ENCODE measurements at regions of chr10 and their contacts with region 1.

Region 1: GRCh38 chr10:72297968-72298773 is 24.4 kb downstream of the DDIT4 start:
- DNase-seq: peak; percentile 98
- ATAC-seq: peak; percentile 76
- H3K4me3 Mint-ChIP-seq: peak overlapping the region; percentile 80
- H3K27ac Mint-ChIP-seq: peak overlapping the region; percentile 99
- H3K4me1 Mint-ChIP-seq: peaks cover 54% of the 10 kb centered on the region
- H3K27me3 Mint-ChIP-seq: no peaks in the 10 kb centered on the region
- CTCF ChIP-seq: no peak

Region 2: DNA sequence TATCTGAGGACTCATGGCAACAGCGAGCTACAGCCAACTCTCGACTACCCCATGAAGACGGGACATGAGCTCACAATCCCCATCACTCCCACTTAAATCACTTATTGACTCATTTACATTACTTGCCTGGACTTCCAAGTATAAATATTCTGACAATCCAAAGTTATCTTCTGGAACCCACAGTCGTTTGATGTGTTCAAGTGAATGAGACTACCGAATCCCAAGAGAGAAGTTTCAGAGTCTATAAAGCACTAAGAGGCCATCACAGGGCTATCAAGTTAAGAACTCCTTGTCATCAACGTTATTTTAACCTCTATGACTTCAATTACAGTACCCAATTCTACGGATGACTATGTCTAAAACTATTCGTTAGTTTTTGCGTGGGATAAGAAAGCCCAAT is 93.9 kb before region 1 on chr10:
- CTCF ChIA-PET with region 1: no interaction called
- POLR2A ChIA-PET with region 1: no interaction called
- intact Hi-C with region 1: no loop called
- DNase-seq: no peak
- ATAC-seq: no peak
- H3K4me3 Mint-ChIP-seq: no peak overlapping the region
- H3K27ac Mint-ChIP-seq: no peak overlapping the region
- H3K4me1 Mint-ChIP-seq: peaks cover 11% of the 10 kb centered on the region
- H3K27me3 Mint-ChIP-seq: no peaks in the 10 kb centered on the region
- CTCF ChIP-seq: no peak

Region 3: DNA sequence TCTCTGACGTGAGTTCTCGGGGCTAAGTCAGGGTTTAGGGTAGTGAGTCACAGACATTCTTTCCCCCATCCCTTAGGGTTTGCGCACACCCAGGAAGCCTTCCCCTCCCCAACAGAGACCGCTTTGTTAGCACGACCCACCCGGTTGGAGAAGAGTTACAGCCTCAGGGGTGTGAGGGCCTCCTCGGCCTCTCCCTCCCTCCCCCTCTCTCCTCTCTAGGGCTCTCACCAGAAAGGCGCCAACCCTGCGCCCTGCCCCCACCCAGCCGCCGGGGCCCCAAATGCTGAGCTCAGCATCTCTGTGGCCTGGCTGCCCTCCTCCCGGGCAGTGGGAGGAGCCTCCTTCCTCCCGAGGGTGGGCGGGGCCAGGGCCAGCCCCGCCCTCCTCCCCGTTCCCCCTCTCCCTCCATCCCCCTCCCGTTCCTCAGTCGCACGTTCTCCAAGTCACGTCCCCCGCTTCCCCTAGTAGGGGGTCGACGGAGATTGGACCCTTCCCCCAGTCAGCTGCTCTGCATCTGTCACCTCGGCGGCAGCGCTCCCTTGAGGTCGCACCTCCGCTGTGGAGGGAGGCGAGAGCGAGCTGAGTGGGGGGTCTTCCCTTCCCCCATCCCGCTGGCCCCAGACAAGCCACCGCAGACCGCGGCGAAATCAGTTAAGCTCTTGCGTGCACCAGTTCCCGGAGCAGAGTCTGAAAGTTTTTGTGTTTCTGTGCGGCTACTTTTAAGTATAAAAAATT is 37.4 kb before region 1 on chr10:
- CTCF ChIA-PET with region 1: interaction called, 4 read pairs
- POLR2A ChIA-PET with region 1: interaction called, 16 read pairs
- intact Hi-C with region 1: loop called (anchors 5 kb)
- DNase-seq: peak; percentile 96
- ATAC-seq: peak; percentile 82
- H3K4me3 Mint-ChIP-seq: peak overlapping the region; percentile 79
- H3K27ac Mint-ChIP-seq: peak overlapping the region; percentile 96
- H3K4me1 Mint-ChIP-seq: peaks cover 52% of the 10 kb centered on the region
- H3K27me3 Mint-ChIP-seq: no peaks in the 10 kb centered on the region
- CTCF ChIP-seq: no peak

Region 4: GRCh38 chr10:72308320-72308987 is 10.3 kb after region 1 on chr10:
- CTCF ChIA-PET with region 1: interaction called, 6 read pairs
- POLR2A ChIA-PET with region 1: interaction called, 796 read pairs
- intact Hi-C with region 1: no loop called
- DNase-seq: peak; percentile 69
- ATAC-seq: peak; percentile 51
- H3K4me3 Mint-ChIP-seq: no peak overlapping the region
- H3K27ac Mint-ChIP-seq: peak overlapping the region; percentile 86
- H3K4me1 Mint-ChIP-seq: peaks cover 68% of the 10 kb centered on the region
- H3K27me3 Mint-ChIP-seq: no peaks in the 10 kb centered on the region
- CTCF ChIP-seq: no peak

Region 5: GRCh38 chr10:72435570-72435969 is 137.4 kb after region 1 on chr10:
- CTCF ChIA-PET with region 1: no interaction called
- POLR2A ChIA-PET with region 1: no interaction called
- intact Hi-C with region 1: no loop called
- DNase-seq: no peak
- ATAC-seq: no peak
- H3K4me3 Mint-ChIP-seq: no peak overlapping the region
- H3K27ac Mint-ChIP-seq: no peak overlapping the region
- H3K4me1 Mint-ChIP-seq: no peaks in the 10 kb centered on the region
- H3K27me3 Mint-ChIP-seq: no peaks in the 10 kb centered on the region
- CTCF ChIP-seq: no peak

Measured in activated CD8-positive, alpha-beta T cell treated with anti-CD3 and anti-CD28 coated beads for 36 hours (primary cell).